Breast epithelium (tissue), 4 donors: ENCODE measurements at regions of chr20 and their contacts with region 1.

Region 1: GRCh38 chr20:23503649-23504048 is 12.7 kb downstream of the CST8 start:
- DNase-seq: no peak
- H3K4me3 ChIP-seq: no peak overlapping the region
- H3K27ac ChIP-seq: no peak overlapping the region
- H3K4me1 ChIP-seq: no peaks in the 10 kb centered on the region
- H3K27me3 ChIP-seq: no peaks in the 10 kb centered on the region
- CTCF ChIP-seq: no peak
- POLR2A ChIP-seq: no peak

Region 2: GRCh38 chr20:22958390-22958789 is 545.3 kb before region 1 on chr20:
- intact Hi-C with region 1: loop called (anchors 5 kb)
- DNase-seq: no peak
- H3K4me3 ChIP-seq: no peak overlapping the region
- H3K27ac ChIP-seq: no peak overlapping the region
- H3K4me1 ChIP-seq: no peaks in the 10 kb centered on the region
- H3K27me3 ChIP-seq: no peaks in the 10 kb centered on the region
- CTCF ChIP-seq: no peak
- POLR2A ChIP-seq: no peak

Region 3: DNA sequence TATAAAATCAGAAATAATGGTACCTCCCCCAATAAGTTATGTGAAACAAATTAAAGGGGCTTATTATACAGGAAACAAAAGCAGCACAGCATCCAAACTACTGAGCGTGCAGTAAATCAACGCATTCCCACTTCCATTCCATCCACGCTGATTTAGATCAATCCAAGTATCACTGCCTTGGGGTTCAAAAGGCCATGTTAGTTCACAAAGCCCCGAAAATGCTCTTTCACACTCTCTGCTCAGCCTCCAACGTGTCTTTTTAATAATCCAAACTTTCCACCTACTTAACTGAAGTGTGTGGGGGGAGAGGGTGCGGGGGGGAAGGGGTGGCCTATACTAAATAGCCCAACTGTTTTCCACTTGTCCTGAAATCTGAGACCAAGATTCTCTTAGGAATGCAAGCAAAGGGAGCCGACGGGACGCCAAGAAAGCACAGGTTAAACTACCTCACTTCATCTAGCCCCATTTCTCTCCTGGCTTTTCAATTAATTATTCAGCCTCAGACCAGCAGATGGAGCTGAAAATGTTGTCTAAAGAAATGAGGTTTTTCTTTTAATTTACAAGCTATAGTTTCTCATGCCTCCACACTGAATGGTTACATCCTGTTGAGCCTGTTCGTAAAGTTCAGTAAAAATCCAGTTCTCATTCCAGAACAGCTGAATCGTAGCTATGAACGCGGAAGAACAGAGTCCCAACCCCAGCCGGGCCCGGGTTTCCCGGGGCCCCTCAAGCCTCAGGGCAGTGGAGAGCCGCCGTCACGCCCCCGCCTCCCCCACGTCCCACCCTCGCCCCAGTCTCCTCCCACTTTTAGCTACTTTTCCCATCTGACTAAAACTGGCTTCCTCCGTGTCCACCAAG is 154.1 kb before region 1 on chr20:
- intact Hi-C with region 1: no loop called
- DNase-seq: peak in 1 of 2 donors; percentile 77
- H3K4me3 ChIP-seq: peak overlapping the region; percentile 86 to 100 (median 95)
- H3K27ac ChIP-seq: peak overlapping the region; percentile 93 to 99
- H3K4me1 ChIP-seq: peaks cover 0 to 10% of the 10 kb centered on the region in 2 donors
- H3K27me3 ChIP-seq: no peaks in the 10 kb centered on the region
- CTCF ChIP-seq: peak; percentile 53 to 70 (median 64)
- POLR2A ChIP-seq: no peak

Region 4: GRCh38 chr20:23823621-23824324 is 320.1 kb after region 1 on chr20:
- intact Hi-C with region 1: no loop called
- DNase-seq: no peak
- H3K4me3 ChIP-seq: no peak overlapping the region
- H3K27ac ChIP-seq: no peak overlapping the region
- H3K4me1 ChIP-seq: no peaks in the 10 kb centered on the region
- H3K27me3 ChIP-seq: no peaks in the 10 kb centered on the region
- CTCF ChIP-seq: no peak
- POLR2A ChIP-seq: no peak